Activated naive CD4-positive, alpha-beta T cell treated with anti-CD3 and anti-CD28 coated beads for 36 hours (primary cell): ENCODE measurements at regions of chr5 and their contacts with region 1.

Region 1: DNA sequence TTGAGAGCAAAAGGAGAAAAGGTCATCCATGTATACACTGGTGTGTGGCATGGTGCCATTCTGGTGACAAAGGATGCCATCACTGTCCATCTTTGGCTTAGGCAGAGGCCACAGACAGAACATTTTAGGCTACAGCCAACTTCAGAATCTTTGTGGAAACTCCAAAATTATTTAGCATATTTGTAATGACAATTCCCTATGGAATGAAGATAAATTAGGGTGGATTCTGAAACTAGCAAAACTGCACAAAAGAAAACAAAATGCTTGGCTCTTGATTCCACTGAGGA is 92.5 kb downstream of the FBXW11 start:
- DNase-seq: no peak
- H3K4me3 Mint-ChIP-seq: no peak overlapping the region
- H3K27ac Mint-ChIP-seq: no peak overlapping the region
- H3K4me1 Mint-ChIP-seq: peaks cover 57% of the 10 kb centered on the region
- H3K27me3 Mint-ChIP-seq: no peaks in the 10 kb centered on the region

Region 2: GRCh38 chr5:171953860-171954701 is 40.2 kb after region 1 on chr5:
- CTCF ChIA-PET with region 1: interaction called, 36 read pairs
- intact Hi-C with region 1: no loop called
- DNase-seq: no peak
- H3K4me3 Mint-ChIP-seq: no peak overlapping the region
- H3K27ac Mint-ChIP-seq: no peak overlapping the region
- H3K4me1 Mint-ChIP-seq: peaks cover 67% of the 10 kb centered on the region
- H3K27me3 Mint-ChIP-seq: no peaks in the 10 kb centered on the region

Region 3: GRCh38 chr5:172006321-172007174 is 92.6 kb after region 1 on chr5 and contains the start of gene FBXW11:
- CTCF ChIA-PET with region 1: interaction called, 61 read pairs
- intact Hi-C with region 1: loop called (anchors 1 kb)
- DNase-seq: peak; percentile 96
- H3K4me3 Mint-ChIP-seq: peak within 1 kb of the TSS; percentile 96
- H3K27ac Mint-ChIP-seq: peak within 1 kb of the TSS; percentile 99
- H3K4me1 Mint-ChIP-seq: peaks cover 46% of the 10 kb centered on the region
- H3K27me3 Mint-ChIP-seq: no peaks in the 10 kb centered on the region
- total RNA-seq, gene FBXW11: 32.8 to 35.5 TPM

Region 4: GRCh38 chr5:172048539-172049101 is 134.7 kb after region 1 on chr5:
- CTCF ChIA-PET with region 1: interaction called, 75 read pairs
- intact Hi-C with region 1: no loop called
- DNase-seq: no peak
- H3K4me3 Mint-ChIP-seq: no peak overlapping the region
- H3K27ac Mint-ChIP-seq: peak overlapping the region; percentile 82
- H3K4me1 Mint-ChIP-seq: peaks cover 11% of the 10 kb centered on the region
- H3K27me3 Mint-ChIP-seq: no peaks in the 10 kb centered on the region